Mammary epithelial cell (primary cell): ENCODE measurements at regions of chr22 and their contacts with region 1.

Region 1: GRCh38 chr22:18070556-18071306 is 7.1 kb upstream of the PEX26 start:
- DNase-seq: peak; percentile 79
- H3K4me3 ChIP-seq: no peak overlapping the region
- H3K27ac ChIP-seq: peak overlapping the region; percentile 44
- H3K4me1 ChIP-seq: peaks cover 29% of the 10 kb centered on the region
- H3K27me3 ChIP-seq: no peaks in the 10 kb centered on the region
- CTCF ChIP-seq: peak; percentile 61 to 68

Region 2: DNA sequence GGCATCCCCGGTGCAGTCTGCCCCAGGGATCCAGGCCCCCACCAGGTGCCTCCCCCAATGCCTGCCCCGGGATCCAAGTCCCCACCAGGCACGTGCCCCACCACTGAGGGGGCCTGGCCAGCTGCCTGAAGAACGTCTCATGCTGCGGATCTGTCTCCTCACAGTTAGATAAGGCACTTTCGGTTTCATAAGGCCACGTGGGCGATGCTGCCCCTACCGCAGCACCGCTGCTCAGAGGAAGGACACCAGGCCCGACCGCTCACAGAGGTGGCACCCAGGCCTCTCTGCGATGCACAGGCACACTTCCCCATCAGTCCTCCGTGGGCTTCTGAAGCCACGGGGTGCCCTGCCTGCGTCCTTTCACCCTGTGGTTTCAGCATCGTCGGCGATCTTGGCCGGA is 228.3 kb before region 1 on chr22:
- CTCF ChIA-PET with region 1: no interaction called
- dilution Hi-C with region 1: no loop called
- in situ Hi-C with region 1: loop called (anchors 5 to 10 kb)
- intact Hi-C with region 1: no loop called
- DNase-seq: no peak
- H3K4me3 ChIP-seq: no peak overlapping the region
- H3K27ac ChIP-seq: no peak overlapping the region
- H3K4me1 ChIP-seq: peaks cover 16% of the 10 kb centered on the region
- H3K27me3 ChIP-seq: no peaks in the 10 kb centered on the region
- CTCF ChIP-seq: no peak